Activated CD4-positive, alpha-beta T cell treated with anti-CD3 and anti-CD28 coated beads for 36 hours (primary cell): ENCODE measurements at regions of chr14 and their contacts with region 1.

Region 1: GRCh38 chr14:23095196-23096108 is at the start of gene C14orf119:
- DNase-seq: peak; percentile 100
- ATAC-seq: peak; percentile 93
- H3K4me3 Mint-ChIP-seq: no peak within 1 kb of the TSS
- H3K27ac Mint-ChIP-seq: no peak within 1 kb of the TSS
- H3K4me1 Mint-ChIP-seq: peaks cover 19% of the 10 kb centered on the region
- H3K27me3 Mint-ChIP-seq: no peaks in the 10 kb centered on the region
- total RNA-seq, gene C14orf119: 43.8 to 51.5 TPM

Region 2: GRCh38 chr14:22200977-22201605 is 894.4 kb before region 1 on chr14:
- CTCF ChIA-PET with region 1: no interaction called
- POLR2A ChIA-PET with region 1: no interaction called
- intact Hi-C with region 1: no loop called
- DNase-seq: no peak
- ATAC-seq: peak; percentile 73
- H3K4me3 Mint-ChIP-seq: no peak overlapping the region
- H3K27ac Mint-ChIP-seq: no peak overlapping the region
- H3K4me1 Mint-ChIP-seq: peaks cover 15% of the 10 kb centered on the region
- H3K27me3 Mint-ChIP-seq: no peaks in the 10 kb centered on the region

Region 3: DNA sequence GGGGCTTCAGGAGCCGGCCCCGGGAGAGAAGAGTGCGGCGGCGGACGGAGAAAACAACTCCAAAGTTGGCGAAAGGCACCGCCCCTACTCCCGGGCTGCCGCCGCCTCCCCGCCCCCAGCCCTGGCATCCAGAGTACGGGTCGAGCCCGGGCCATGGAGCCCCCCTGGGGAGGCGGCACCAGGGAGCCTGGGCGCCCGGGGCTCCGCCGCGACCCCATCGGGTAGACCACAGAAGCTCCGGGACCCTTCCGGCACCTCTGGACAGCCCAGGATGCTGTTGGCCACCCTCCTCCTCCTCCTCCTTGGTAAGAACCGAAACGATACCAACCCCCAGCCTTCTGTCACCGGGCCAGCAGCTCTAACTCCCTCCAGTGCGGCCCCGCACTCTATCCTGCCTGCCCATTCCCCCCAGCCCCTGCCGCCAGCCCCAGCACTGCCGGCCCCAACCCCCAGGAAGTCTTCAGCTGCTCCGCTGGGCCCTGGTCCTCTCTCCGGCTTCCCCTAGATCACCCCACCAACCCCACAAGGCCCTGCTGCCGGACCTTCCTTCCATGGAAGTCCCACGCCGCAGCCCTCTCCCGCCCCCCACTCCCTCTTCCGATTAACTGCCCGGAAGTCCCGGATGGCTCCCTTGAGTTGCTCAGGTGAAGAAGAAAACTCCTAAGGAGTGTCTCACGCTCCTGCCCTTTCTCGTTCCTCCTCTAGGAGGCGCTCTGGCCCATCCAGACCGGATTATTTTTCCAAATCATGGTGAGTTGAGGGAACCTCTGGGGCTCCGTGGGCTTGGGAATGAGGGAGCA is 223.2 kb before region 1 on chr14:
- CTCF ChIA-PET with region 1: no interaction called
- POLR2A ChIA-PET with region 1: no interaction called
- intact Hi-C with region 1: loop called in 1 of 2 experiments (anchors 1 kb)
- DNase-seq: peak; percentile 84
- ATAC-seq: peak; percentile 13
- H3K4me3 Mint-ChIP-seq: peak overlapping the region; percentile 88
- H3K27ac Mint-ChIP-seq: peak overlapping the region; percentile 91
- H3K4me1 Mint-ChIP-seq: peaks cover 37% of the 10 kb centered on the region
- H3K27me3 Mint-ChIP-seq: no peaks in the 10 kb centered on the region

Region 4: DNA sequence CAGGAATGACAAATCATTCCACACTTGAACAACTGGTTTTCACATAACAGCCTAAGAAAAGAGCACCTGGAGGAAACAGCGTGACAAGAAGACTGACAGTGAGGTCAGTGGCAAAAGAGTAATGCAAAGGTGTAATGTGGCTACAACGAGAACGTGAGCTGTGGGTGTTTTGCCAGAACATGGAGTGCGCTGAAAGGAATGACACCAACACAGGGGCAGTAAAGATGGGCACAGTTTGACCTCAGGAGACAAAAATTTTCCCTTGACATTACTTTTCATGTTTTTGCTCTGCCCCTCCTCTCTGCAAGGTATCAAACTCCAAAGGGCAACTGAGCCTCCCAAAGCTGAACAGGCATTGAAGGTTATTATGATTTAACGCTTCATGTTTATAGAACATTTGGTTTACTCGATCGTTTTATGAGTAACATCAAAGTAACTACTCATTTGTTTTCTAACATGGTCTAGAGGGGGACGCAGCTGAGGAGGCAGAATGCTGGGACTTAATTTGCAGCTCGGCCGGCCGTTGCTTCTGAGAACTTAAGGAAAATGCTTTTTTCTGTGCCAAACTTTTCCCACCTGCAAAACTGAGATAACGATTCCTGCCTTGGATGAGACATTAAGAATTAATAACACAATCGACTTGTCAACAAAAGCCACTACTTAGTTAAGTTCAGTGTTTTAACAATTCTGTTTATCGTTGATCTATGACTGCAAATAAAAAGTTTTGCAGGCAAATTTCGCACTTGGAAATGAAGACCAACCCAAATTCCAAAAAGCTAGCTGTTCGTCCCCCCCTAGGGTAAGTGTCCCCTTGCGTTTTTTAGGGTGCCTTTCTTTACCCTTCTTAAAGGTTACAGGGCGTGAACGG is 139.5 kb before region 1 on chr14:
- CTCF ChIA-PET with region 1: interaction called, 4 read pairs
- POLR2A ChIA-PET with region 1: interaction called, 8 read pairs
- intact Hi-C with region 1: loop called in 1 of 2 experiments (anchors 1 kb)
- DNase-seq: no peak
- ATAC-seq: no peak
- H3K4me3 Mint-ChIP-seq: peak overlapping the region; percentile 88
- H3K27ac Mint-ChIP-seq: peak overlapping the region; percentile 90
- H3K4me1 Mint-ChIP-seq: peaks cover 18% of the 10 kb centered on the region
- H3K27me3 Mint-ChIP-seq: no peaks in the 10 kb centered on the region

Region 5: GRCh38 chr14:23068476-23069412 is 26.7 kb before region 1 on chr14:
- CTCF ChIA-PET with region 1: interaction called, 41 read pairs
- POLR2A ChIA-PET with region 1: interaction called, 27 read pairs
- intact Hi-C with region 1: loop called (anchors 1 kb)
- DNase-seq: peak; percentile 84
- ATAC-seq: peak; percentile 79
- H3K4me3 Mint-ChIP-seq: peak overlapping the region; percentile 5
- H3K27ac Mint-ChIP-seq: peak overlapping the region; percentile 80
- H3K4me1 Mint-ChIP-seq: peaks cover 37% of the 10 kb centered on the region
- H3K27me3 Mint-ChIP-seq: no peaks in the 10 kb centered on the region

Region 6: DNA sequence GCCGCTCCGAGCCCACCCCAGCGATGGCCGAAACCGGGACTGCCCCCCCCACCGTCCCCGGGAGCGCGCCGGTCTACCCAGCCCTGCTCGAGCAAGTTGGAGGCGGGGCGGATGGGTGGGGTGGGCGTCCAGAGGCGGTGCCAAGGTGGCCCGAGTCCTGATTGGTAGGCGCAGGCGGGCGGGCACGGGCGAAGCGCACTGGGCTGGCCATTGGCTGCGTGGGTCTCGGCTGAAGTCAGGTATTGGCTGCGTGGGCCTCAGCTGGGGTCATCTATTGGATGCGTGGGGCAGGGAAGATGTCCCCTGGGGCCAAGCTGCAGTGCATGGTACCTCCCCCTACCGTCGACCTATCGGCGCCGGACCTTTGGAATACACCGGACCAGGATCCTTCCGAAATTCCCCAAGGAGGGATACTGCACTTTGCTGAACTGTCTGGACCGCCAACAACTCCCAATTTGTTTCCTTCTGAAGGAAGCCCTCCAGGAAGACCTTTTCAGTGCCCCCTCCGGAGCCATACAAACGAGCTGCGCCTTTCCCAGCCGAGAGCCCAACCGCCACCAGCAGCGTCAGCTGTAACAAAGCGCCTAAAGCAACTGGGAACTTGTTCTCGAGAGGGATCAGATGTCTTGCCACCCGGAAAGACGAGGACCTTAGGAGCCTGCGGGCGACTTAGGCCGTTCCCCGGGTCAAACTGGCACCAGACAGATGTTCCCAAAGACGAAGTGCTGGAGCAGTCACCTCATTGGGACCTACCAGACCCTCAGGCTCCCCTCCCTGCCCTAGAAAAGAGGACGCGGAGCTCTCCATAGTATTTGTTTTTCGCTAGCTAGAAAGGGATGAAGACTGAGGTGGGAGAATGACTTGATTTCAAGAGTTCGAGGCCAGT is 190.8 kb after region 1 on chr14 and contains the start of gene HOMEZ:
- CTCF ChIA-PET with region 1: no interaction called
- POLR2A ChIA-PET with region 1: interaction called, 3 read pairs
- intact Hi-C with region 1: loop called (anchors 1 to 10 kb)
- DNase-seq: peak; percentile 99
- ATAC-seq: peak; percentile 98
- H3K4me3 Mint-ChIP-seq: peak within 1 kb of the TSS; percentile 99
- H3K27ac Mint-ChIP-seq: peak within 1 kb of the TSS; percentile 95
- H3K4me1 Mint-ChIP-seq: peaks cover 18% of the 10 kb centered on the region
- H3K27me3 Mint-ChIP-seq: no peaks in the 10 kb centered on the region
- total RNA-seq, gene HOMEZ: 13.7 to 17.5 TPM

Region 7: GRCh38 chr14:23555882-23556699 is 460.6 kb after region 1 on chr14 and contains the start of gene THTPA:
- CTCF ChIA-PET with region 1: no interaction called
- POLR2A ChIA-PET with region 1: no interaction called
- intact Hi-C with region 1: loop called in 1 of 2 experiments (anchors 5 kb)
- DNase-seq: peak; percentile 96
- ATAC-seq: peak; percentile 83
- H3K4me3 Mint-ChIP-seq: peak within 1 kb of the TSS; percentile 95
- H3K27ac Mint-ChIP-seq: peak within 1 kb of the TSS; percentile 93
- H3K4me1 Mint-ChIP-seq: peaks cover 36% of the 10 kb centered on the region
- H3K27me3 Mint-ChIP-seq: no peaks in the 10 kb centered on the region
- total RNA-seq, gene THTPA: 8.3 to 8.5 TPM